ENCODE measurements at regions of chr5 and their contacts with region 1.

Region 1: GRCh38 chr5:58842852-58843251 is 260.0 kb downstream of the RAB3C start:
- DNase-seq: peak in 1 of 2 experiments; percentile 29
- ATAC-seq: peak in 1 of 2 experiments; percentile 42; a peak in 1 of 6 replicates
- H3K4me3 ChIP-seq: no peak overlapping the region
- H3K27ac ChIP-seq: no peak overlapping the region
- H3K4me1 ChIP-seq: peaks cover 12% of the 10 kb centered on the region
- CTCF ChIP-seq: no peak
- EP300 ChIP-seq: no peak
- POLR2A ChIP-seq: no peak
- RAD21 ChIP-seq: no peak

Region 2: DNA sequence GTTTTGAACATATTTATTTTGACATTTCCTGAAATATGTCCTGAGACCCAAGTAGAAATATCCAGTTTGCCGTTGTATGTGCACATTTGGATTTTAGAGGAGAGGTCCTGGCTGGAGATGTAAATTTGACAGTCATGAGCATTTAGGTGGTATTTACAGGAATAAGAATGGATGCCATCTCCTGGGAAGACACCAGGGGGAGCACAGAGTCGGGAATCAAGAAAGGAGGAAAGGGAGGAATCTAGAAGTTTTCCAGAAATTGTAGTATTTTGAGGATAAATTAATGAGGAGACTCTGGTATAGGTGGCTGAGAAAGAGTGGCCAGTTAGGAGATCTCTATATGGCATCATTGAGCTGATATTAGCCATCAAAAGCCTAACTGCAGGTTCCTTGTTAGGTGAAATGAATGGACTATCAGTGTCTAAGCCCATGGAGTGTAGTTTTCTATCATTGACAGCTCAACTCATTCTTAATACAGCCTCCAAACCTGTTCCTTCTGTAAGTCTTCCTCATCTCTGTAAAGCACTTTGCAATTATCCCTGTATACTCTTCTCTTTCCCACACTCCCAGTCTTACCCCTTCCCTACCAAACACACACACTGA is 344.4 kb before region 1 on chr5:
- CTCF ChIA-PET with region 1: interaction called, 266 read pairs
- POLR2A ChIA-PET with region 1: no interaction called
- DNase-seq: peak; percentile 28 to 53
- ATAC-seq: peak; percentile 64 to 81; a peak in 4 of 6 replicates
- H3K4me3 ChIP-seq: no peak overlapping the region
- H3K27ac ChIP-seq: no peak overlapping the region
- H3K4me1 ChIP-seq: no peaks in the 10 kb centered on the region
- CTCF ChIP-seq: peak; percentile 81
- EP300 ChIP-seq: no peak
- POLR2A ChIP-seq: no peak
- RAD21 ChIP-seq: peak; percentile 73 to 77

Measured in A549 (cell line).